ENCODE measurements at regions of chr3 and their contacts with region 1.

Region 1: DNA sequence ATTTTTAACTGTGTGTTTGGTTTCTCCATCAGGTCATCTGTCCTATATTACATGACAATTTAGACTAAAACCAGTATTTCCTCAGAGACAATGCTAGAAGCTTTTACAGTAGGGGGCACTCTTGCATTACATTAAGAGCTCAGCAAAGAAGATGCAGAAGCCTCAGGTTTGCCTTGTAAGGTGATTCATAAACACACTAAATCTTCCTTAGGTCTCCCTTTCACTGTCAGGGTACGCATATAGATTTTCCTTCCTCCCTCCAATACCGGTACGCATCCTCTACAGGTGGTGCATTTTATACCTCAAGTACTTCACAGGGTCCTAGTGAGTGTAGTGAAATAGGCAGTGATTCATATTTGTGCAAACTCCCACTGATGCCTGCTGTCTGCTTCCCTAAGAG is 46.5 kb downstream of the CD86 start:
- DNase-seq: no peak
- H3K4me3 Mint-ChIP-seq: peak overlapping the region; percentile 25
- H3K27ac Mint-ChIP-seq: no peak overlapping the region
- H3K4me1 Mint-ChIP-seq: peaks cover 14% of the 10 kb centered on the region
- H3K27me3 Mint-ChIP-seq: no peaks in the 10 kb centered on the region

Region 2: DNA sequence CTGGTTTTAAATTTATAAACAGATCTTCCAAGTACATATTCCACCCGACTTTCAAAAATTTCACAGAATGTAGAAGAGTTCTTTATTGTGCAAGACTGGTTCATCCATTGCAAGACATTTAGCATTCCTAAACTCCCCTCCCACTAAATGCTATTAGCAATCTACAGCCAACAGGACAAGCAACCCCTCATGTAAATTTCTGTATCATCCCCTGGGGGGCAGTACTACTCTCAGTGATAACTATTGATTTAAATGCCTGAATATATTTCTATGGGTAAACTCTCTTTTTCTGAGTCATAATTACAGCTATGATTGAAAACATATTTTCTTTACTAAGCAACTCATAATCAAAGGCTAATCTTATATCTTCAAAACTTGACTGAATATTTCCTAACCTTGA is 218.1 kb before region 1 on chr3:
- CTCF ChIA-PET with region 1: interaction called, 28 read pairs
- POLR2A ChIA-PET with region 1: no interaction called
- DNase-seq: no peak
- H3K4me3 Mint-ChIP-seq: no peak overlapping the region
- H3K27ac Mint-ChIP-seq: no peak overlapping the region
- H3K4me1 Mint-ChIP-seq: peaks cover 5% of the 10 kb centered on the region
- H3K27me3 Mint-ChIP-seq: no peaks in the 10 kb centered on the region

Region 3: GRCh38 chr3:122081543-122082247 is 20.0 kb before region 1 on chr3:
- CTCF ChIA-PET with region 1: interaction called, 68 read pairs
- POLR2A ChIA-PET with region 1: interaction called, 568 read pairs
- DNase-seq: no peak
- H3K4me3 Mint-ChIP-seq: peak overlapping the region; percentile 30
- H3K27ac Mint-ChIP-seq: peak overlapping the region; percentile 83
- H3K4me1 Mint-ChIP-seq: peaks cover 97% of the 10 kb centered on the region
- H3K27me3 Mint-ChIP-seq: no peaks in the 10 kb centered on the region

Region 4: DNA sequence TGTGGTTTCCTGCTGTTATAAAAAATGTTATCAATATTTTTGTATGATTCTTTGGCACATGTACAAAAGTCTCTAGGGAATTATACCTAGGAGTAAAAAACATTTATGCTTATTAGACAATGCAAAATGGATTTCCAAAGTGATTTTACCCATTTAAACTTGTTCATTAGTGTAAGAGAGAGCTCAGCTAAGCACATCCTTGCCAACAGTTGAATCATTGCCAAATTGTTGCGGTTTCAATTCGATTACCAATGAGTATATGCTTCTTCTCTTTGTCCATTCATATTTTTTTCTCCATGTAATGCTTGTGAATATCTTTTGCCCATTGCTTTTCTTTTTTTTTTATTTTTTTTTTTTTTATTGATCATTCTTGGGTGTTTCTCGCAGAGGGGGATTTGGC is 99.0 kb after region 1 on chr3:
- CTCF ChIA-PET with region 1: no interaction called
- POLR2A ChIA-PET with region 1: no interaction called
- DNase-seq: no peak
- H3K4me3 Mint-ChIP-seq: no peak overlapping the region
- H3K27ac Mint-ChIP-seq: no peak overlapping the region
- H3K4me1 Mint-ChIP-seq: peaks cover 16% of the 10 kb centered on the region
- H3K27me3 Mint-ChIP-seq: peaks cover 14% of the 10 kb centered on the region

Region 5: GRCh38 chr3:122214711-122215110 is 113.1 kb after region 1 on chr3:
- CTCF ChIA-PET with region 1: no interaction called
- POLR2A ChIA-PET with region 1: no interaction called
- DNase-seq: no peak
- H3K4me3 Mint-ChIP-seq: no peak overlapping the region
- H3K27ac Mint-ChIP-seq: no peak overlapping the region
- H3K4me1 Mint-ChIP-seq: no peaks in the 10 kb centered on the region
- H3K27me3 Mint-ChIP-seq: peaks cover 29% of the 10 kb centered on the region

Region 6: DNA sequence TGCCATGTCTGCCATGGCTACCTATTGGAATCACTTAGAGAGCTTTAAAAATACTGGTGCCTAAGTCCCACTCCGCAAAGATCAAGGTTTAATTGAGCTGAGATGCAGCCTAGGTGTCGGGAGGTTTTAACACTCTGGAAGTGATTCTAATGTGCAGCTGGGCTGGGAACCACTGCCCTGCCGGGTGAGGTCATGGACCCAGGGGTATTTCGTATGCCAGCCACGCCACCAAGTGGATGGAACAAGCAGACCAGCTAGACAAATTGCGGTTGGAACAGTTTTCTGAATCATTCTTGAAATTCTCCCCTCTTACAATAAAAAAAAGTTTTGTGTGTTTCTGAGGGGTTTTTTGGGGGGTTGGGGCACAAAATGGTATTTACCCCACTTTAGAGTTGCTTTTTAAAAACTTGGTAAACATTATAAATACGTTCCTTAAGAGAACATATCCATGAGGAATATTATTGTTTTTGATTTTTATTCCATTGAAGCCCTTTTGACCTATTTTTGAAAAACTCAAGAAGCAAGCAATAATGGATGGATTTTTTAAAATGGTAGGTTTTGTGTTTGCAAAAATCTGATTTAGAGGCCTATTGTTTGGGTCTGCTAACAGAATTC is 157.2 kb after region 1 on chr3:
- CTCF ChIA-PET with region 1: interaction called, 132 read pairs
- POLR2A ChIA-PET with region 1: interaction called, 22 read pairs
- DNase-seq: peak; percentile 78
- H3K4me3 Mint-ChIP-seq: no peak overlapping the region
- H3K27ac Mint-ChIP-seq: no peak overlapping the region
- H3K4me1 Mint-ChIP-seq: peaks cover 23% of the 10 kb centered on the region
- H3K27me3 Mint-ChIP-seq: peaks cover 5% of the 10 kb centered on the region

Region 7: GRCh38 chr3:122383771-122384697 is 282.4 kb after region 1 on chr3 and contains the start of gene FAM162A:
- CTCF ChIA-PET with region 1: interaction called, 17 read pairs
- POLR2A ChIA-PET with region 1: interaction called, 7 read pairs
- DNase-seq: peak; percentile 95
- H3K4me3 Mint-ChIP-seq: peak within 1 kb of the TSS; percentile 88
- H3K27ac Mint-ChIP-seq: peak within 1 kb of the TSS; percentile 86
- H3K4me1 Mint-ChIP-seq: peaks cover 53% of the 10 kb centered on the region
- H3K27me3 Mint-ChIP-seq: no peaks in the 10 kb centered on the region
- total RNA-seq, gene FAM162A: 74.5 to 77.5 TPM

Measured in activated CD4-positive, alpha-beta memory T cell treated with anti-CD3 and anti-CD28 coated beads, Interleukin-2, amount 10 ng/mL, durations not matched to agents 7 days and 5 days (primary cell).